ENCODE measurements at regions of chrX and their contacts with region 1.

Region 1: GRCh38 chrX:21438792-21439191 is 64.6 kb downstream of the CNKSR2 start:
- DNase-seq: peak; percentile 64
- ATAC-seq: peak; percentile 90
- H3K4me3 ChIP-seq: peak overlapping the region in 1 of 5 experiments; percentile 48
- H3K4me3 Mint-ChIP-seq: peak overlapping the region; percentile 74
- H3K27ac ChIP-seq: peak overlapping the region; percentile 62 to 81
- H3K27ac Mint-ChIP-seq: peak overlapping the region; percentile 87
- H3K4me1 ChIP-seq: peaks cover 8 to 24% of the 10 kb centered on the region in 2 donors
- H3K4me1 Mint-ChIP-seq: peaks cover 29% of the 10 kb centered on the region
- H3K27me3 ChIP-seq: no peaks in the 10 kb centered on the region
- H3K27me3 Mint-ChIP-seq: no peaks in the 10 kb centered on the region
- CTCF ChIP-seq: no peak

Region 2: DNA sequence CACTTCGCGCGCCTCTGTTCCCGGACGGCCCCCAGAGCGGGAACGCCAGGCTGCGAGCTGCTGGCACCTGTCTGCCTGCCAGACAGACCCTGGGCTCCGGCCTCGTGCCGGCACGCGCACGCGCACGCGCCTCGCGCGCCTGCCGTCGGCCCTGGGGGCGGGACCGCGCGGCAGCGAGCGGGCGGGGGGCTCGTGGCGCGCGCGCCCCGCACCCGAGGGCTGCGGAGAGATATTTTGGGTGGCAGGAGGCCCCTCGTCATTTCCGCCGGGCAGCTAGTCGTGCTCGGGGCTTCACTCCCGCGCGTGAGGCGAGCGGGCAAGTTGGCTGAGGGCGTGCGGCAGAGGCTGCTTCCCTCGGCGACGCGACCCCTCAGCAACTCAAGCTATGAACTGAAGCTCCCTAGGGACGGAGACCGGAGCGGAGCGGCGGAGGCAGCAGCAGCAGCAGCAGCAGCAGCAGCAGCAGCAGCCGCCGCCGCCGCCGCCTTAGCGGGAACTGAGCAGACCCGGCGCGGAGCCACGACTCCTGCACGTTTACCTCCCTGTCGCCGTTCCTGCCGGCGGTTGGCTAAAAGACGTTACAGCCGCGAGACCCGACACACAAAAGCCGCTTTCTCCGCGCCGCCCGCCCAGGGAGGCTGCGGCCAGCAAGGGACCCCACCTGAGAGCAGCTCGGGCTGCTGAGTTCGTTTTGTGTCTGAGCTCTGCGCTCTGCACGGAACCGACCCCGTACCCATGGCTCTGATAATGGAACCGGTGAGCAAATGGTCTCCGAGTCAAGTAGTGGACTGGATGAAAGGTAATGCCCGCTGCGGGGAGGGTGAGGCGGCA is 64.4 kb before region 1 on chrX and contains the start of gene CNKSR2:
- CTCF ChIA-PET with region 1: no interaction called
- POLR2A ChIA-PET with region 1: interaction called, 4 read pairs
- intact Hi-C with region 1: loop called (anchors 2 kb)
- DNase-seq: peak; percentile 87
- ATAC-seq: peak; percentile 76
- H3K4me3 ChIP-seq: peak within 1 kb of the TSS in 4 of 5 experiments; percentile 74 to 83 (median 82)
- H3K4me3 Mint-ChIP-seq: peak within 1 kb of the TSS; percentile 92
- H3K27ac ChIP-seq: peak within 1 kb of the TSS; percentile 73 to 84
- H3K27ac Mint-ChIP-seq: peak within 1 kb of the TSS; percentile 90
- H3K4me1 ChIP-seq: peaks cover 6 to 18% of the 10 kb centered on the region in 2 donors
- H3K4me1 Mint-ChIP-seq: peaks cover 32% of the 10 kb centered on the region
- H3K27me3 ChIP-seq: no peaks in the 10 kb centered on the region
- H3K27me3 Mint-ChIP-seq: no peaks in the 10 kb centered on the region
- CTCF ChIP-seq: no peak
- total RNA-seq, gene CNKSR2: 18.8 and 22.5 TPM in 2 replicates

Region 3: DNA sequence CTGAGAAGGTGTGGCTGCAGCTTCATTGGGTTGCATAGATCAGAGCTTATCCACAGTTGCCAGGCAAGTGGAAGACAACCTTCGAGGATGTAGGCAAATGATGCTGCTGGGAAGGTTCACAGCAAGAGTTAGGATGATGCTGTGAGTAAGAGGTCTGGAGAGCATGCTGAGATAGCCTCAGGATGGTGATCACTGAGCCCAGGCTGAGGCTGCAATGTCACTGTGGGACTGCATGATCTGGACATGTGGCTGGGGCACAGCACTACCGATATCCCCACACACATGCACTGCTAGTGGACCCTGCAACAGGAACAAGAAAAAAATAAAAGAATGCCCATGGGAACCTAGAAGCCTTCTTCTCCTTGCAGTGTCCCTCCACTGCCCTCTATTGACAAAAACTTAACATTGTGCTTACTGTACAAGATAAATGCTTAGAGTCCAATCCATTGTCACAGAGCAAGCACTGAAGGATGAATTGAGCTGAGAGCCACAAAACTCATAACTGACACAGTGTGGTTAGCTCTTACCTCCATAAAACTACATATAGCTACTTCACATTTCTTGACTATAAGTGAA is 41.0 kb after region 1 on chrX:
- CTCF ChIA-PET with region 1: interaction called, 13 read pairs
- POLR2A ChIA-PET with region 1: no interaction called
- intact Hi-C with region 1: no loop called
- DNase-seq: peak; percentile 69
- ATAC-seq: peak; percentile 84
- H3K4me3 ChIP-seq: no peak overlapping the region
- H3K4me3 Mint-ChIP-seq: no peak overlapping the region
- H3K27ac ChIP-seq: no peak overlapping the region
- H3K27ac Mint-ChIP-seq: peak overlapping the region; percentile 41
- H3K4me1 ChIP-seq: peaks cover 0 to 4% of the 10 kb centered on the region in 2 donors
- H3K4me1 Mint-ChIP-seq: peaks cover 5% of the 10 kb centered on the region
- H3K27me3 ChIP-seq: no peaks in the 10 kb centered on the region
- H3K27me3 Mint-ChIP-seq: no peaks in the 10 kb centered on the region
- CTCF ChIP-seq: peak; percentile 76